CD4-positive, alpha-beta T cell (primary cell): ENCODE measurements at regions of chr1 and their contacts with region 1.

Region 1: DNA sequence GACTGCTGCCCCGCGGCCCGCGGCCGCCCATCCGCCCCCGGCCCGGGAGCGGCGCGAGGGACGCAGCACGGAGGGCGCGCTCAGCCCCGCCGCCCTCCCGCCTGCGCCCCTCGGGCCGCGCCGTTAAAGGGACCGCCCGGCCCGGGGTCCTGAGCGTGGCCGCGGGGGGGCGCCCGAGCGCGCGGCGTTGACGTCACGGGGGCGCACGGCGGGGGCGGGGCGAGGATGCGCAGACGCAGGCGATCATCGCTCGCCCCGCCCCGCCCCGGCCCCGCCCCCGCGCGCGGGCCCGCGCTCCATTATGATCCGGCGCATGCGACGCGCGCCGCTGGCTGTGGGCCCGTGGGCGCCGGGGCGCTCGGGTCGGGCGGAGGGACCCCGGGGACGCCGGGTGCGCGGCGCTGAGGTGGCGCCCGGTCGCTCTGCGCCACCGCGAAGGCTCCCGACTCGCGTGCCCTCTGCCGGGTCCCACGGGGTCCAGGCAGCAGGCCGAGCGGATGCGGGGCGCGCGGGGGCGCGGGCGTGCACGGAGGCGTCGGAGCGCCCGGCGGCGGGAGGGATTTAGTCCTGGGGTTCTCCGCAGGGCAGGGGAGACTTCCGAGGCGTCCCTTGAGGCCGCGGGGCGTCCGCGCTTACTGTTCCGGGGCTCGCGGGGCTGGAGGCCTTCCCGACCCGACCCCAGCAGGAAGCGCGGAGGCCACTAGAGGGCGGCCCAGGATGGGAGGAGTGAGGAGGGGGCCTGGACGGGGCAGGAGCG is at the start of gene DVL1:
- DNase-seq: peak; percentile 58 to 90 (median 70)
- ATAC-seq: peak; percentile 75
- H3K4me3 ChIP-seq: peak within 1 kb of the TSS; percentile 58
- H3K4me3 Mint-ChIP-seq: peak within 1 kb of the TSS; percentile 86
- H3K27ac ChIP-seq: peak within 1 kb of the TSS in 1 of 2 donors; percentile 53
- H3K27ac Mint-ChIP-seq: no peak within 1 kb of the TSS
- H3K4me1 ChIP-seq: peaks cover 58% of the 10 kb centered on the region
- H3K4me1 Mint-ChIP-seq: peaks cover 36% of the 10 kb centered on the region
- H3K27me3 ChIP-seq: peaks cover 14 to 19% of the 10 kb centered on the region in 2 experiments
- H3K27me3 Mint-ChIP-seq: peaks cover 21% of the 10 kb centered on the region
- CTCF ChIP-seq: peak; percentile 27
- total RNA-seq, gene DVL1: 44.9 to 45.5 TPM

Region 2: GRCh38 chr1:1040004-1040991 is 309.1 kb before region 1 on chr1:
- CTCF ChIA-PET with region 1: no interaction called
- POLR2A ChIA-PET with region 1: no interaction called
- intact Hi-C with region 1: no loop called
- DNase-seq: peak; percentile 67 to 94 (median 78)
- ATAC-seq: peak; percentile 94
- H3K4me3 ChIP-seq: peak overlapping the region; percentile 44
- H3K4me3 Mint-ChIP-seq: peak overlapping the region; percentile 77
- H3K27ac ChIP-seq: no peak overlapping the region
- H3K27ac Mint-ChIP-seq: no peak overlapping the region
- H3K4me1 ChIP-seq: peaks cover 18% of the 10 kb centered on the region
- H3K4me1 Mint-ChIP-seq: peaks cover 16% of the 10 kb centered on the region
- H3K27me3 ChIP-seq: peaks cover 16 to 24% of the 10 kb centered on the region in 2 experiments
- H3K27me3 Mint-ChIP-seq: peaks cover 37% of the 10 kb centered on the region
- CTCF ChIP-seq: no peak

Region 3: DNA sequence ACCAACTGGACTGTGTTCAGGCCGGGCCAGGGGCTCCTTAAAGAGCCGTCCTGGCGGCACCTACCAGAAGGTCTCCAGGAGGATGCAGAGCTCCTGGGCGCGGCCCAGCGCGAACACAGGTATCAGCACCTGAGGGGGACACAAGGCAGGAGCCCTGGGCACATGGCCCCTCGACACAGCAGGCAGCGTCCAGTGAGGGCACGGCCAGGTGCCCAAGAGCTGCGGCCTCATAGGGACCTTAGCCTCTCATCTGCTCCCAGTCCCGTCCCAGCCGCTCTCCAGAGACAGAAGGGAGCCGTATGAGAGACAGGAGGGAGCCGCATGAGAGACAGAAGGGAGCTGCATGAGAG is 35.2 kb before region 1 on chr1:
- CTCF ChIA-PET with region 1: no interaction called
- POLR2A ChIA-PET with region 1: no interaction called
- intact Hi-C with region 1: no loop called
- DNase-seq: no peak
- ATAC-seq: no peak
- H3K4me3 ChIP-seq: no peak overlapping the region
- H3K4me3 Mint-ChIP-seq: no peak overlapping the region
- H3K27ac ChIP-seq: no peak overlapping the region
- H3K27ac Mint-ChIP-seq: no peak overlapping the region
- H3K4me1 ChIP-seq: peaks cover 18% of the 10 kb centered on the region
- H3K4me1 Mint-ChIP-seq: peaks cover 4% of the 10 kb centered on the region
- H3K27me3 ChIP-seq: no peaks in the 10 kb centered on the region
- H3K27me3 Mint-ChIP-seq: no peaks in the 10 kb centered on the region
- CTCF ChIP-seq: no peak

Region 4: GRCh38 chr1:1324521-1325287 is 24.7 kb before region 1 on chr1 and contains the starts of genes CPTP and INTS11:
- CTCF ChIA-PET with region 1: no interaction called
- POLR2A ChIA-PET with region 1: no interaction called
- intact Hi-C with region 1: loop called (anchors 1 to 2 kb)
- DNase-seq: peak; percentile 93 to 98 (median 96)
- ATAC-seq: peak; percentile 84
- H3K4me3 ChIP-seq: peak within 1 kb of the TSS; percentile 69
- H3K4me3 Mint-ChIP-seq: peak within 1 kb of the TSS; percentile 93
- H3K27ac ChIP-seq: peak within 1 kb of the TSS; percentile 61 to 70
- H3K27ac Mint-ChIP-seq: peak within 1 kb of the TSS; percentile 81
- H3K4me1 ChIP-seq: peaks cover 56% of the 10 kb centered on the region
- H3K4me1 Mint-ChIP-seq: peaks cover 28% of the 10 kb centered on the region
- H3K27me3 ChIP-seq: no peaks in the 10 kb centered on the region
- H3K27me3 Mint-ChIP-seq: no peaks in the 10 kb centered on the region
- CTCF ChIP-seq: no peak
- total RNA-seq, gene CPTP: 11.6 to 12.9 TPM
- total RNA-seq, gene INTS11: 130 to 137 TPM